Activated CD4-positive, alpha-beta memory T cell treated with anti-CD3 and anti-CD28 coated beads for 36 hours (primary cell): ENCODE measurements at regions of chr11 and their contacts with region 1.

Region 1: GRCh38 chr11:17504330-17505107 is 27.9 kb upstream of the ABCC8 start:
- DNase-seq: peak; percentile 81
- H3K4me3 Mint-ChIP-seq: no peak overlapping the region
- H3K27ac Mint-ChIP-seq: no peak overlapping the region
- H3K4me1 Mint-ChIP-seq: no peaks in the 10 kb centered on the region
- H3K27me3 Mint-ChIP-seq: peaks cover 10% of the 10 kb centered on the region

Region 2: GRCh38 chr11:16785520-16786128 is 718.9 kb before region 1 on chr11:
- CTCF ChIA-PET with region 1: interaction called, 3 read pairs
- POLR2A ChIA-PET with region 1: no interaction called
- intact Hi-C with region 1: loop called (anchors 10 kb)
- DNase-seq: peak; percentile 72
- H3K4me3 Mint-ChIP-seq: no peak overlapping the region
- H3K27ac Mint-ChIP-seq: no peak overlapping the region
- H3K4me1 Mint-ChIP-seq: no peaks in the 10 kb centered on the region
- H3K27me3 Mint-ChIP-seq: no peaks in the 10 kb centered on the region

Region 3: GRCh38 chr11:16935518-16936302 is 568.8 kb before region 1 on chr11:
- CTCF ChIA-PET with region 1: no interaction called
- POLR2A ChIA-PET with region 1: no interaction called
- intact Hi-C with region 1: loop called (anchors 10 kb)
- DNase-seq: peak; percentile 42
- H3K4me3 Mint-ChIP-seq: no peak overlapping the region
- H3K27ac Mint-ChIP-seq: no peak overlapping the region
- H3K4me1 Mint-ChIP-seq: peaks cover 3% of the 10 kb centered on the region
- H3K27me3 Mint-ChIP-seq: peaks cover 2% of the 10 kb centered on the region

Region 4: DNA sequence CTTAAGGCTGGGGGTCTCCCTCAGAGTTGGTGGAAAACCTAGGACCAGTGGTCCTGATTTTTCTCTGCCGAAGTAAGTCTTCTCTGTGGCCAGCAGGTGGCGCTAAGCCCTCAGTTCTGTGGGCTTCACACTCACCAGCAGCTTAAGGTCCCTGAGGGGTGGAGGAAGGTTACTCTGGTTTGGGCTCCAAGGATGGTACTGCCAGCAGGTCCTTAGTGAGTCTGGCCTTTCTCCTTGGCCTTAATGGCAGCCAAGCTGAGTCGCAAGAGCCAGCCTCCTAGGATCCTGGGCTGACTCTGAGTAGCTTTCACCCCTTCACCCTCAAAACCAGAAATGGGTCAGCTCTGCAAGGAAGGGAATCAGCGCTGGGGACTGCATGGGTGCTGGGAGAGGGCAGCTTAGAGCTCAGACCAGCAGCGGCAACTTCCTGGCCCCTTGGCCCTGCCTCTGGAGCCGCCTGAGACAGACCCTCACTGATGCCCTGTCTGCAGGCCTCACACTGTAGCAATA is 120.5 kb before region 1 on chr11:
- CTCF ChIA-PET with region 1: interaction called, 103 read pairs
- POLR2A ChIA-PET with region 1: no interaction called
- intact Hi-C with region 1: loop called (anchors 1 kb)
- DNase-seq: peak; percentile 81
- H3K4me3 Mint-ChIP-seq: no peak overlapping the region
- H3K27ac Mint-ChIP-seq: no peak overlapping the region
- H3K4me1 Mint-ChIP-seq: no peaks in the 10 kb centered on the region
- H3K27me3 Mint-ChIP-seq: peaks cover 4% of the 10 kb centered on the region

Region 5: GRCh38 chr11:17389211-17389956 is 115.1 kb before region 1 on chr11:
- CTCF ChIA-PET with region 1: interaction called, 103 read pairs
- POLR2A ChIA-PET with region 1: no interaction called
- intact Hi-C with region 1: loop called (anchors 1 kb)
- DNase-seq: peak; percentile 78
- H3K4me3 Mint-ChIP-seq: peak overlapping the region; percentile 61
- H3K27ac Mint-ChIP-seq: no peak overlapping the region
- H3K4me1 Mint-ChIP-seq: no peaks in the 10 kb centered on the region
- H3K27me3 Mint-ChIP-seq: peaks cover 4% of the 10 kb centered on the region